ENCODE measurements at regions of chr3 and their contacts with region 1.

Region 1: GRCh38 chr3:161035711-161036110 is 69.4 kb downstream of the B3GALNT1 start:
- DNase-seq: no peak
- ATAC-seq: no peak
- H3K4me3 Mint-ChIP-seq: peak overlapping the region; percentile 22
- H3K27ac Mint-ChIP-seq: peak overlapping the region; percentile 66
- H3K4me1 Mint-ChIP-seq: peaks cover 17% of the 10 kb centered on the region
- H3K27me3 Mint-ChIP-seq: no peaks in the 10 kb centered on the region
- CTCF ChIP-seq: no peak

Region 2: DNA sequence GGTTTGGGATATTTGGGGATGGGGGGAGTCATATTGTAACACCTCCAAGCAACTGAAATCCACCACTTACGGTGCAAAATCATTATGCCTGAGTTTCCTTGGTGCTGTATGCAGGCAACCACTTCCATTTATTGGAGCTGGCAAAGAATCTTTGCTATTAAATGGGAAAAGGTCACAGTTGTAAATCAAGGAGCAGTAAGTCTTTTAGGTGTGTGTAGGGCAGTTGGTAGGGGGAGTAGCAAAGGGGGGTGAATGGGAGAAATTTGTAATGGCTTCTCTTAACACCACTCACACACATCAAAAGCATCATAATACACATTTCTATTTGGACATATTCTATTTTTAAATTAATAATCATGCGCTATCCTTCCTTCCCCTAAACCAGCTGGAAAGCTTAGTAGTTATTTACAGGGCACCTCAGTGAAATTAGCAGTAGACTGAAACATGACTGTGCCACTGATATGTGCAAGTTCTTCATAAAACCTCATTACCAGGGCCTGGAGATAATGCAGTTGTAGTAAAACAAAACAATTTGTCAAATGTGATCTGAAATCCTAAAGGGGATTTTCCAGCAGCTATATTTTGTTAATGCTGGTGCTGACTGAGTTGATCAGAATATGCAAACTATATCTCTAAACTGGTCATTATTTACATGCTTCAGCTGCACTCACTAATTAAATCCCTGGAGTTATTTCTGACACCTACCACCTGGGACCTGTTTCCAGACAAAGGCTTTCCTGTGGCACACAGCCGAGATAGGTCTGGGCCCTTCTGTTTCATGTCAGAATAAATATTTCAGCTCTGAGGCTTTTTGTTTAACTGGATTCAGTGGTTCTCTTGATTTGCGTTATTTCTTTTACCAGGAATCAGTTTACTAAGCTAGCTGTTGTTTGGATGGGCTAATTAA is 20.6 kb before region 1 on chr3:
- CTCF ChIA-PET with region 1: no interaction called
- POLR2A ChIA-PET with region 1: no interaction called
- intact Hi-C with region 1: no loop called
- DNase-seq: no peak
- ATAC-seq: no peak
- H3K4me3 Mint-ChIP-seq: no peak overlapping the region
- H3K27ac Mint-ChIP-seq: no peak overlapping the region
- H3K4me1 Mint-ChIP-seq: no peaks in the 10 kb centered on the region
- H3K27me3 Mint-ChIP-seq: no peaks in the 10 kb centered on the region
- CTCF ChIP-seq: no peak

Region 3: DNA sequence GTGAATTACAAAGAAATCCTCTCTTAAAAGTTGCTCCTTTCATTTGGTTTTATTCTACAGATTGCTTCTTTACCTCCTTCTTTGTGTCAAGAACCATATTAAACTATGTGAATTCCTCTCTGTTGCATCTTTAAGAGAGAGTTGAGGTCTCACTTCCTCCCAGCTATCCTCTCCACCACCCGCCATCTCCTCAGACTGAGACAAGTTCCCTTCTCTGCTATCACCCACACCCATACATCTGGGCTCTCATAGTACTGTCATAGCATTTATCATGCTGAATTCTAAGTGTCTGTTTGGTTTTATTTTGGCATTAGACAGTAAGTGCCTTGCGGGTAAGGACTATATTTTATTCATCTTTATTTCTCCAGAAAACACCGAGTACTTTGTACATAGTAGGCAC is 15.2 kb after region 1 on chr3:
- CTCF ChIA-PET with region 1: no interaction called
- POLR2A ChIA-PET with region 1: no interaction called
- intact Hi-C with region 1: no loop called
- DNase-seq: no peak
- ATAC-seq: no peak
- H3K4me3 Mint-ChIP-seq: no peak overlapping the region
- H3K27ac Mint-ChIP-seq: no peak overlapping the region
- H3K4me1 Mint-ChIP-seq: peaks cover 12% of the 10 kb centered on the region
- H3K27me3 Mint-ChIP-seq: no peaks in the 10 kb centered on the region
- CTCF ChIP-seq: no peak

Region 4: GRCh38 chr3:161069511-161070263 is 34.0 kb after region 1 on chr3:
- CTCF ChIA-PET with region 1: no interaction called
- POLR2A ChIA-PET with region 1: interaction called, 3 read pairs
- intact Hi-C with region 1: loop called (anchors 5 kb)
- DNase-seq: no peak
- ATAC-seq: peak; percentile 76
- H3K4me3 Mint-ChIP-seq: no peak overlapping the region
- H3K27ac Mint-ChIP-seq: peak overlapping the region; percentile 23
- H3K4me1 Mint-ChIP-seq: peaks cover 46% of the 10 kb centered on the region
- H3K27me3 Mint-ChIP-seq: no peaks in the 10 kb centered on the region
- CTCF ChIP-seq: no peak